ENCODE measurements at regions of chr10 and their contacts with region 1.

Region 1: DNA sequence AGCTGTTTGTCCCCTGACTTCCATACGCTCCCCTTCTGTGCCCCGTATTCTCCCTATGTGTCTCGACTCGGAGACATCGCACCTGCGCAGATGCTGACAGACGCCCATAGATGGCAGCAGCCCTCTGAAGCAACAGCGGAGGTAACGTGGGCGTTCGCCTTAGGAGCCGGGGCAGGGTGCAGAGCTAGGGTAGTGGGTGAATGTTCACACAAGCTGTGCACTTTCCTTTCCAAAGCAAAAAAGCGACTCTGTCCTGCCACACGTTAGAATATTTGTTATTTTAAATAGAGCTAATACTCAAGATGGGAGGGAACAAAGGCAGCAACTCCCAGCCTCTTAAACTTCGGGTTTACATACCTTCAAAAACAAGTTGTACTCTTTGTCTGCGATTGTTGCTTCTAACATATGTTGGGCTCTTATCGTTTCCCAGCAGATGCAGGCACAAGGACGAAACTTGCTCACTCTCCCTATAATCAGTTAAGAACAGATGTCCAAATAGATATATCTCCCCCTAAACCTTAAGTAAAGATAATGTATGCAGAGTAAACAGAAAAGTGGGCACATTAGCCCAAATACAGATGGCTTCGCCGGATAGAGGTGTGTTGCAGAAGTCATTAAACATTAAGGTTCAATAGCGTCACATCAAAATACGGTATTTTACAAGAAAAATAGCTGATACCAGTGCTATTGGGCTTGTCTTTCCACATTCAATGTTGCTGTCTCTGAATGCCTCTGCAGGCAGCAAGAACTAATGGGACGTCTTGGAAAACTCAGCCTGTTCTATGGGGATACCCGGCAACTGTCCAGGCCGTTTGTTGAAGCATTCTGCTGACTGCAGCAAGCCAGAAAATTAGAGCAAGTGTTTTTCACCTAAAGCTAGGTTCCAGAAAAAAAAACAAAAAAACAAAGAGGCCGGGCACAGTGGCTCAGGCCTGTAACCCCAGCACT is 340.3 kb upstream of the PRKCQ start:
- DNase-seq: peak; percentile 49
- ATAC-seq: peak; percentile 93
- H3K4me3 Mint-ChIP-seq: no peak overlapping the region
- H3K27ac Mint-ChIP-seq: no peak overlapping the region
- H3K4me1 Mint-ChIP-seq: peaks cover 26% of the 10 kb centered on the region
- H3K27me3 Mint-ChIP-seq: no peaks in the 10 kb centered on the region
- CTCF ChIP-seq: peak; percentile 33

Region 2: DNA sequence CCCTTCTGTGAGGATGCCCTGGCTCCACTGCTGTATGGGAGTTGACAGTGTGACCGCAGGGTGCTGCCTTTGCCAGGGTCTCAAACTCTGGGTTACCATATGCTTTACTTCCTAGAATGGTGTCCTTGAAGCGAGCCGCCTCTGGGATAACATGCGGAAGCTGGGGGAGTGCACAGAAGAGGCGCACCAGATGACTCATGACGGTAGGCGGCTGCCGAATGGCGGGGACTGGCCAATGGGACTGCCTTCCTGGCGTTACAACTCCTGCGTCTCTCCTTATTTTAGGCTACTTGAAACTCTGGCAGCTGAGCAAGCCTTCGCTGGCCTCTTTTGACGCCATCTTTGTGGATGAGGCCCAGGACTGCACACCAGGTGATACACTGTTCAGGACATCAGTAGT is 1003.0 kb before region 1 on chr10:
- CTCF ChIA-PET with region 1: no interaction called
- POLR2A ChIA-PET with region 1: no interaction called
- intact Hi-C with region 1: no loop called
- DNase-seq: no peak
- ATAC-seq: no peak
- H3K4me3 Mint-ChIP-seq: no peak overlapping the region
- H3K27ac Mint-ChIP-seq: no peak overlapping the region
- H3K4me1 Mint-ChIP-seq: no peaks in the 10 kb centered on the region
- H3K27me3 Mint-ChIP-seq: no peaks in the 10 kb centered on the region
- CTCF ChIP-seq: no peak

Region 3: DNA sequence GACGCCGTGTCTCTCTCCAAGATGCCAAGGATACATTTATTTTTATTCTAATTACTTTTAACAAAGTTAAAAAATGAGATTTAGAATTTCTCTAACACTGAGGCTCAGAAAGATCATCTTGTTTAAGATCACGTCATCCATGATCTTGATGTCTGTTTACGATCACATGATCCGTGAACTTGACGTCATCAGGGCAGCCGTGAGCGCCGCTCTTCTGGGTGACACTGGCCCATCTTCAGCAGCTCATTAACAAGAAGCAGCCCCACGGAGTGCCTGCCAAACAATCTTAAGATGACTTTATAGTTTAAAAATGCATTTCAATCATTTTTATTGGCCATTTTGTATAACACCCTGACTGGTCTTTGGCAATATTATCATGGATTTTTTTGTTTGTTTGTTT is 49.2 kb before region 1 on chr10:
- CTCF ChIA-PET with region 1: no interaction called
- POLR2A ChIA-PET with region 1: no interaction called
- intact Hi-C with region 1: no loop called
- DNase-seq: no peak
- ATAC-seq: no peak
- H3K4me3 Mint-ChIP-seq: no peak overlapping the region
- H3K27ac Mint-ChIP-seq: no peak overlapping the region
- H3K4me1 Mint-ChIP-seq: no peaks in the 10 kb centered on the region
- H3K27me3 Mint-ChIP-seq: peaks cover 18% of the 10 kb centered on the region
- CTCF ChIP-seq: no peak

Region 4: GRCh38 chr10:6977398-6978186 is 57.2 kb after region 1 on chr10:
- CTCF ChIA-PET with region 1: interaction called, 6 read pairs
- POLR2A ChIA-PET with region 1: no interaction called
- intact Hi-C with region 1: loop called (anchors 1 kb)
- DNase-seq: no peak
- ATAC-seq: no peak
- H3K4me3 Mint-ChIP-seq: no peak overlapping the region
- H3K27ac Mint-ChIP-seq: no peak overlapping the region
- H3K4me1 Mint-ChIP-seq: no peaks in the 10 kb centered on the region
- H3K27me3 Mint-ChIP-seq: peaks cover 18% of the 10 kb centered on the region
- CTCF ChIP-seq: no peak

Region 5: DNA sequence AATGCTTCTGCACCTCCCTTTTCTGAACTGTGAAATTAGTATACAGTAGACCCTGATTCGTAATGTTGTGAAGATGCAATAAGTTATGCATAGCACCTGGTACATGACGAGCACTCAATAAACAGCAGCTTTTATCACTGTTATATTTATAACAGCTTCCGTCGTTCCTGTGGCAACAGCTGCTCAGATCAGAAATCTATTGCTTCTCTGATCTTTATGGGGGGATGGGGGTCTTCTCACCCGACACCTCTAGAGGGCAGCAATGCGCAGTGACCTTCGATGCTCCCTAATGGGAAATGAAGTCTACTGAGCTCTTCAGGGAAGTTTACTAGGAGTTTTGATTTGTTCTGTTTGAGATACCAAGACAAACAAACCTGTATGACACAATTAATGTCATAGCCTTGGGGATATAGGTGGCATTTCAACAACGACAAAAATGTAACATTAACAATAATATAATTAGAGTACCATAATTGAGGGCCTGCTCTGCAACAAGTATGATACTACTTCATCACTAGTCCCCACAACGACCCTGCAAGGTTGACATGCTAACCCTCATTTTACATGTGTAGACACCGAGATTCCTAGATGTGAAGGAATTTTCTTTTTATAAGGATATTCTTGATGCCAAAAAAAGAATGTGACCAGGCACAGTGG is 200.9 kb after region 1 on chr10:
- CTCF ChIA-PET with region 1: interaction called, 9 read pairs
- POLR2A ChIA-PET with region 1: no interaction called
- intact Hi-C with region 1: loop called (anchors 1 kb)
- DNase-seq: peak; percentile 43
- ATAC-seq: peak; percentile 85
- H3K4me3 Mint-ChIP-seq: no peak overlapping the region
- H3K27ac Mint-ChIP-seq: no peak overlapping the region
- H3K4me1 Mint-ChIP-seq: peaks cover 6% of the 10 kb centered on the region
- H3K27me3 Mint-ChIP-seq: peaks cover 3% of the 10 kb centered on the region
- CTCF ChIP-seq: peak; percentile 42

Region 6: GRCh38 chr10:7192831-7193361 is 272.6 kb after region 1 on chr10:
- CTCF ChIA-PET with region 1: no interaction called
- POLR2A ChIA-PET with region 1: no interaction called
- intact Hi-C with region 1: loop called (anchors 5 kb)
- DNase-seq: no peak
- ATAC-seq: peak; percentile 74
- H3K4me3 Mint-ChIP-seq: peak overlapping the region; percentile 66
- H3K27ac Mint-ChIP-seq: peak overlapping the region; percentile 87
- H3K4me1 Mint-ChIP-seq: peaks cover 50% of the 10 kb centered on the region
- H3K27me3 Mint-ChIP-seq: no peaks in the 10 kb centered on the region
- CTCF ChIP-seq: no peak

Region 7: DNA sequence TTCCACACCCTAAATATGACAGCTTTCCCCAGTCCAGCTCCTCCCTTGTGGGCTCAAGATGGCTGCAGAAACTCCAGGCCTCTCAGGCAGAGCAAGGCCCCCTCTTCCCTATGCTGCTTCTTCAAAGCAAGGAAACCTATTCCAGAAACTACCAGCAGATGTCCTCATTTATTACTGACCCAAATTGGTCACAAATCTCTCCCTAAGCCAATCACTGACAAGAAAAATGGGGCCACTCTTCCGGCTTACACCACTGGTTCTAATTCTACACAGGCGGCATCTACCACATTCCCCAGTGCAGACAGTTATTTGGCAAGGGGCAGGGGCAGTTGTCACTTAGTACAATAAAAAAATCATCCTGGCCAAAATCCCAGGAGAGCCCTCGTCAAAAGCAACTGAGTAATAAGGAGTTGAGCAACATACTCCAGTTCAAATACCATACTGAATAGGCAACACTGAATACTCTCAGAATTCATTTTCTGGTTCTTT is 340.1 kb after region 1 on chr10:
- CTCF ChIA-PET with region 1: interaction called, 3 read pairs
- POLR2A ChIA-PET with region 1: no interaction called
- intact Hi-C with region 1: loop called (anchors 1 kb)
- DNase-seq: no peak
- ATAC-seq: peak; percentile 81
- H3K4me3 Mint-ChIP-seq: no peak overlapping the region
- H3K27ac Mint-ChIP-seq: no peak overlapping the region
- H3K4me1 Mint-ChIP-seq: peaks cover 29% of the 10 kb centered on the region
- H3K27me3 Mint-ChIP-seq: no peaks in the 10 kb centered on the region
- CTCF ChIP-seq: peak; percentile 53

Region 8: GRCh38 chr10:7417103-7417623 is 496.8 kb after region 1 on chr10:
- CTCF ChIA-PET with region 1: interaction called, 15 read pairs
- POLR2A ChIA-PET with region 1: no interaction called
- intact Hi-C with region 1: loop called (anchors 1 kb)
- DNase-seq: no peak
- ATAC-seq: no peak
- H3K4me3 Mint-ChIP-seq: no peak overlapping the region
- H3K27ac Mint-ChIP-seq: no peak overlapping the region
- H3K4me1 Mint-ChIP-seq: peaks cover 6% of the 10 kb centered on the region
- H3K27me3 Mint-ChIP-seq: peaks cover 5% of the 10 kb centered on the region
- CTCF ChIP-seq: no peak

Measured in activated B cell treated with CpG ODN at 0.5 μM for 24 hours (primary cell).